ENCODE measurements at regions of chr4 and their contacts with region 1.

Region 1: GRCh38 chr4:111641955-111642579 is 503.2 kb upstream of the FAM241A start:
- DNase-seq: peak; percentile 76
- H3K4me3 Mint-ChIP-seq: no peak overlapping the region
- H3K27ac Mint-ChIP-seq: no peak overlapping the region
- H3K4me1 Mint-ChIP-seq: no peaks in the 10 kb centered on the region
- H3K27me3 Mint-ChIP-seq: peaks cover 3% of the 10 kb centered on the region

Region 2: GRCh38 chr4:111854494-111855087 is 212.5 kb after region 1 on chr4:
- intact Hi-C with region 1: loop called (anchors 5 kb)
- DNase-seq: peak; percentile 64
- H3K4me3 Mint-ChIP-seq: no peak overlapping the region
- H3K27ac Mint-ChIP-seq: no peak overlapping the region
- H3K4me1 Mint-ChIP-seq: no peaks in the 10 kb centered on the region
- H3K27me3 Mint-ChIP-seq: no peaks in the 10 kb centered on the region